ENCODE measurements at regions of chr11 and their contacts with region 1.

Region 1: GRCh38 chr11:74929431-74930363 is 19.2 kb downstream of the XRRA1 start:
- DNase-seq: no peak
- H3K4me3 ChIP-seq: no peak overlapping the region
- H3K27me3 ChIP-seq: no peaks in the 10 kb centered on the region
- CTCF ChIP-seq: peak; percentile 80

Region 2: GRCh38 chr11:74650498-74650897 is 279.2 kb before region 1 on chr11:
- CTCF ChIA-PET with region 1: no interaction called
- POLR2A ChIA-PET with region 1: no interaction called
- DNase-seq: peak; percentile 69
- H3K4me3 ChIP-seq: no peak overlapping the region
- H3K27me3 ChIP-seq: no peaks in the 10 kb centered on the region
- CTCF ChIP-seq: 0 out of 2 replicates have a peak, but pooled peaks have one; percentile 3

Region 3: GRCh38 chr11:74756571-74756970 is 173.1 kb before region 1 on chr11:
- CTCF ChIA-PET with region 1: no interaction called
- POLR2A ChIA-PET with region 1: no interaction called
- DNase-seq: no peak
- H3K4me3 ChIP-seq: no peak overlapping the region
- H3K27me3 ChIP-seq: no peaks in the 10 kb centered on the region
- CTCF ChIP-seq: no peak

Region 4: DNA sequence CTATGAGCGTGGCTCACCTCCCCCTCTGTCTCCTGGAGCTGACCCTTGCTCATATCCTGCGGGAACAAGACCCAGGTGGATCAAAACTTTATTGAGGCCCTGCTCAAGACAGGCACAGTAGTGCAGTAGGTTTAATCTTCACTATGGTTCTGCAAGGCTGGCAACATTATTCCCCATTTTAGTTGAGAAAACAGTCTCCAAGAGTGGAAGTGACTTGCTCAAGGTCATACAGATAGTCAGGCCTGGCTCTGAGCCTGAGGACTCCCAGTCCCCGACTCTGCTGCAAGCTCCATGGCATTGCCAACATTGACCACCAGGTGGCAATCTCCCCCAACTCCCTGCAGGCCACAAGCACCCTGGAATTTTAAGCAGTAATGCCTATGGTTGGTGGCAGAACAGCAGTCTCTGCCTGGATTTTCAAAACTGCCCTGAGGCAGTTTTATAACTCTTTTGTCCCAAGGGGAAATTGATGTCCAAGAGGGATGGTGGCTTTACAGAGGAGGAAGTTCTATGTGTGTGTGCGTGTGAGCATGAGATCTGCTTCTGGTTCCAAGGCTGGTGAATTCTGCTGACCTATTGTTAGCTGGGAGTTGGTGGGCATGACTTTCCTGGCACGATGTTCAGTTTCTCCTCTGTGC is 93.2 kb after region 1 on chr11:
- CTCF ChIA-PET with region 1: interaction called, 20 read pairs
- POLR2A ChIA-PET with region 1: no interaction called
- DNase-seq: peak; percentile 16
- H3K4me3 ChIP-seq: no peak overlapping the region
- H3K27me3 ChIP-seq: no peaks in the 10 kb centered on the region
- CTCF ChIP-seq: peak; percentile 97

Region 5: DNA sequence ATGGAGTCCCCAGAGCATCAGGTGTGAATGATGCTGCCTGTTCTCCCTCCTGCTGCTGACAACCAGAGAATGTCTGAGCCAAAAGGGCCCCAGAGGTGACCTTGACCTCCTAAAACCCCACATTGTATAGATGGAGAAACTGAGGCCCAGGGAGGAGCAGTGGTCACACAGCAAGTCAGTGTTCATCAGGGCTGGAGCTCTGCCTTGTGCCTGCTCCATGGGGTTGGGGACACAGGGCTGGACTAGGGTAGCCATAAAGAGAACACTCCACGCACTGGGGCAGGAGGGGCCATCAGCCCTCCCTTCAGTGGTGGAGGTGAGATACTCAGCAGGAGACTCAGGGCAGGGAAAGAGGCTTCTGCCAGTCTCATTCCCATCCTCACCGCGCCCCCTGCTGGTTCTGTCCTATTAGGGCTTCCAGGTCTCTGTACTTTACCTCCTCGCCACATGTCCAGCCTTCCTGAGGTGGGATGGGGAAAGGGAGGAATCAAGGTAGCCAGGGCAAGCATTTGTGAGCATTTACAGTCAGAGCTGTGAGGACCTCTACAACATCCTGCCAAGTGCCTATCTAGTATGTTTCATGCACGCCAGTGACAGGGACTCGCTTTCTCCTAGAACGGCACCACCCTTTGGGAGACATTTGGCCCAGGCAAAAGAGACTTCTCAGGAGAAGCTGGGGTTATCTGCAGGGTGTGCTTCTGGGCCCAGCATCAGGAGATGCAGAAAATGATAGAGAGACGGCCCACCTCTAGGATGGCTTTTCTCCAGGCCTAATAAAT is 102.3 kb after region 1 on chr11:
- CTCF ChIA-PET with region 1: interaction called, 107 read pairs
- POLR2A ChIA-PET with region 1: no interaction called
- DNase-seq: no peak
- H3K4me3 ChIP-seq: no peak overlapping the region
- H3K27me3 ChIP-seq: no peaks in the 10 kb centered on the region; the same call in 1 of the 2 replicates
- CTCF ChIP-seq: peak; percentile 86

Region 6: DNA sequence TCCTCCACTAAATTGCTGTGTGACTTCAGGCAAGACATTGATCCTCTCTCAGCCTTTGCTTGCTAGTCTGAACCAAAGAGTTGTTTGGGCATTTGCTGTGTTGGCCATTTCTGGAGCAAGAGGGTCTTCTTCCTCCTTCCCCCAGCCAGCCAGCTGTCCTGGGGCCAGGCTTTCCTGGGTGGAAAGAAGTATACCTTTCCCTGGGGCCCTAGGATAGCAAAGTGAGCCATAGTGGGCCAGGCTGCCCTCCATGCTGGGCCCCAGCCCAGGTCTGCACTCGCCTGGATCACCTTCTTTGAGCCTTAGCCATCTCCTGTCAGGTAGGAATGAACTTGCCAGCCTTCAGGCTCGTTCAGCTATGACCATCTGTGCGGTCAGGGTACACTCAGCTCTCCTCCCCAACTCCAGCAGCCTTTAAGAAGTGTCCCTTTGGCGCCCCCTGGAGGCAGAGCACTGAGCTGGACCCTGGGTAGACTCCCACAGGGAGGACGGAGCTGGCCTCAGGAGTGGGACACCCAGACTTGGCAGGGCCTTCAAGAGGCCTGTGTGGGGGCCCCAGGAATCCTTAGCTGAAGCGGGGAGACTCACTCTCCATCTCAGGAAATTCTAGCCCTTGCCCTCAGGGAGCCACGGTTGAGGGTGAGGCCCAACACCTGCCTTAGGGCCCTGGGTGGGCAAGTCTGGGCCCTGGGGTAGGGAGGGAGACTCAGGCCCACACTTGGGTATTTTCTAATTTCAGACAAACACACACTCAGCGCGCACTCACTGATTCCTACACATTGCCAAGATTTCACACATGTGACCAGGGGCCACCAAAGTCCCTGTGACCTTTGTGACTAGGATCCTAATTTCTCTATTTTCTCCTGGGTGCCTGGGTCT is 275.2 kb after region 1 on chr11:
- CTCF ChIA-PET with region 1: interaction called, 55 read pairs
- POLR2A ChIA-PET with region 1: no interaction called
- DNase-seq: peak; percentile 4
- H3K4me3 ChIP-seq: no peak overlapping the region
- H3K27me3 ChIP-seq: peaks cover 10% of the 10 kb centered on the region
- CTCF ChIP-seq: peak; percentile 95

Region 7: GRCh38 chr11:75241036-75241905 is 311.6 kb after region 1 on chr11:
- CTCF ChIA-PET with region 1: interaction called, 14 read pairs
- POLR2A ChIA-PET with region 1: no interaction called
- DNase-seq: peak; percentile 39
- H3K4me3 ChIP-seq: peak overlapping the region; percentile 38
- H3K27me3 ChIP-seq: peaks cover 45% of the 10 kb centered on the region
- CTCF ChIP-seq: peak; percentile 31

Region 8: DNA sequence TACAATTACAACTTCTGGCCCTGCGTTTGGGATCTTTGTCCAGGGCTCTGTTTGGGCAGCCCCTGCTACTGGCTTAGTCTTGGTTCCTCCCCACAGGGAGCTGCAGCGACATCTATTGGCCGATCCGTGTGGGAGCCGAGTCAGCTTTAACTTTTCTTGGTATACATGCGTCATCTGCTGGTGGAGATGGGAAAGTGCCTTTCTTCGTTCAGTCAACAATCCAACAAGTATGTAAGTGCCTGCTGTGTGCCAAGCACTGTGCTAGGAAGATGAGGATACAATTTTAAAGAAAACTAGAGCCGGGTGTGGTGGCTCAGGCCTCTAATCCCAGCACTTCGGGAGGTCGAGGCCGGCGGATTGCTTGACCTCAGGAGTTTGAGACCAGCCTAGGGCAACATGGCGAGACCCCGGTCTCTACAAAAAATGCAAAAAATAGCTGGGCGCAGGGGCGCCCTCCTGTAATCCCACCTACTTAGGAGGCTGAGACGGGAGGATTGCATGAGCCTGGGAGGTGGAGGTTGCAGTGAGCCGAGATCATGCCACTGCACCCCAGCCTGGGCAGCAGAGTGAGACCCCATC is 319.1 kb after region 1 on chr11:
- CTCF ChIA-PET with region 1: interaction called, 23 read pairs
- POLR2A ChIA-PET with region 1: no interaction called
- DNase-seq: peak; percentile 37
- H3K4me3 ChIP-seq: no peak overlapping the region
- H3K27me3 ChIP-seq: peaks cover 17% of the 10 kb centered on the region
- CTCF ChIP-seq: peak; percentile 100